Activated CD4-positive, alpha-beta T cell treated with anti-CD3 and anti-CD28 coated beads for 36 hours (primary cell): ENCODE measurements at regions of chr7 and their contacts with region 1.

Region 1: DNA sequence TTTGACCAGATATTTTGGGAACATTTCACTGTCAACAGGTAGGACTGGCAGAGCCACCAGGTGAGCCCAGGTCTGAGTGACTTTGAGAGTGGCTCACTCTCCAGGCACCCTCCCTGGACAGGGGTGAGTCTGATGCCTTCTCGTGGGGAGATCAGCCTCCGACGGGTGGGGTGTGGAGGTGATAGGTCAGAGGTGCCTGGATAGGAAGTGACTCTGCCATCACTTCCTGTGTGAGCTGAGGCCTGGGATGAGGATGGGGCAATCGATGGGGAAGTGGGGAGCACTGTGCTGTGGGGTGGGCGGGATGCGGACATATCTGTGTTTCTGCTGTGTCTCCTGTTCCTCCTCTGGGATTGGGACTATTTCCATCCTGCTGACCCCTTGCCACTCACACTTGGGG is 34.6 kb downstream of the IFT22 start:
- DNase-seq: peak; percentile 6
- ATAC-seq: no peak
- H3K4me3 Mint-ChIP-seq: no peak overlapping the region
- H3K27ac Mint-ChIP-seq: no peak overlapping the region
- H3K4me1 Mint-ChIP-seq: peaks cover 14% of the 10 kb centered on the region
- H3K27me3 Mint-ChIP-seq: peaks cover 10% of the 10 kb centered on the region

Region 2: DNA sequence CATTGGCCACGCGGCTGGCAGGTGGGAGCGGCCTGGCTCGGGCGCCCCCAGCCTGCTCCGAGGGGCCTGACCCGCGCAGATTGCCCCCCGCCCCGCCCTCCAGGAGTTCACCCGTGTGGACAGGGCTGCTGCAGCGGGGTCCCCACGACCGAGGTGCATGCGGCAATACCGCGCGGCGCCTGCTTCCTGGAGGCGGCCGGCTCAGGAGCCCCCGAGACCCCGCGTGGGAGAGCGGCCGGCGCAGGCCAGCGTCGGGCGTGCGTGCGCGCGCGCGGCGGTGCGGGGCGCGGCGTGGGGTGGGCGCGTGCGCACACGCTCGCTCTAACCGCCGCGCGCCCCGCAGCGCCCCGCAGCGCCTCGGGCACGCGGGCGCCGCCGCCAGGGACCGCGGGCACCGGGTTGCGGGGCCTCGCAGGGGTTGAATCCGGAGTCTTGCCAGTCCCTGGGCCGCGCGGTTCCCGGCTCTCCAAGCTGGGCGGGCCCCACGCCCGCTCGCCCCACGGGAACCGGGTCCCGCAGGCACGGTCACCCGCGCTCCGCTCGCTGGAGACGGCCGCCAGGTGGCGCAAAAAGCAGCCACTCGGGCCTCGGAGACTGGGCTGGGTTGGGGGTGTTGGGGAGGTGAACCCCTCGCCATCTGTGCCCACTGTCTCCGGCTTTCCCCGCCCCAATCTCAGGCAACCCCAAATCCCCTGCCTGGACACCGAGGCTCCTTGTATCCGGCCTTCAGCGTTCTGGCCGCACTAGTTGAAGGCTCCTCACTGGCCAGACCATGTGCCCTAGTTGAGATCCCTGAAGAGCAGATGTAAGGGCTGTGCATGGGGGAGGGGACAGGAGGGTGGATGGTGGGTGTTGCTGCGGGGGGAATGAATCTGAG is 390.1 kb before region 1 on chr7:
- CTCF ChIA-PET with region 1: interaction called, 3 read pairs
- POLR2A ChIA-PET with region 1: no interaction called
- intact Hi-C with region 1: loop called in 1 of 2 experiments (anchors 1 kb)
- DNase-seq: peak; percentile 74
- ATAC-seq: peak; percentile 48
- H3K4me3 Mint-ChIP-seq: no peak overlapping the region
- H3K27ac Mint-ChIP-seq: no peak overlapping the region
- H3K4me1 Mint-ChIP-seq: peaks cover 9% of the 10 kb centered on the region
- H3K27me3 Mint-ChIP-seq: peaks cover 31% of the 10 kb centered on the region

Region 3: DNA sequence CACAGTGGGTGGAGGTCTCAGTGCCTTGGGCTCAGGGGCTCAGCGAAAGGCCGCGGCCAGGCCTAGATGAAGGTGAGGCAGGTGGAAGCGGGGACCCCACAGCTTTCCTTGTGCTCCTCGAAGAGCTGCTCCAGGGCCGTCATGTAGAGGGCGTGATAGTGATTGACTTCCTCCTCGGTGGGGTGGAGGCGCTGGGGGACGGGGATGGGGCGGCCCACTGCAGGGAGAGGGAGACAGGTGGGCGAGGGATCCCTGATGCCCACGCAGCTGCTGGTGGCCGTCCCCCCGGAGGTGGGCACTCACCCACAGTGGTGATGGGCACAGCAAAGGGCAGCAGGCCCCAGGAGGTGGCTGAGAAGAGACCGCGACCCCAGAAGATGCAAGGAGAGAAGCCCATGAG is 91.1 kb before region 1 on chr7:
- CTCF ChIA-PET with region 1: interaction called, 37 read pairs
- POLR2A ChIA-PET with region 1: no interaction called
- intact Hi-C with region 1: loop called in 1 of 2 experiments (anchors 2 kb)
- DNase-seq: no peak
- ATAC-seq: no peak
- H3K4me3 Mint-ChIP-seq: no peak overlapping the region
- H3K27ac Mint-ChIP-seq: no peak overlapping the region
- H3K4me1 Mint-ChIP-seq: peaks cover under 1% of the 10 kb centered on the region
- H3K27me3 Mint-ChIP-seq: peaks cover 10% of the 10 kb centered on the region

Region 4: DNA sequence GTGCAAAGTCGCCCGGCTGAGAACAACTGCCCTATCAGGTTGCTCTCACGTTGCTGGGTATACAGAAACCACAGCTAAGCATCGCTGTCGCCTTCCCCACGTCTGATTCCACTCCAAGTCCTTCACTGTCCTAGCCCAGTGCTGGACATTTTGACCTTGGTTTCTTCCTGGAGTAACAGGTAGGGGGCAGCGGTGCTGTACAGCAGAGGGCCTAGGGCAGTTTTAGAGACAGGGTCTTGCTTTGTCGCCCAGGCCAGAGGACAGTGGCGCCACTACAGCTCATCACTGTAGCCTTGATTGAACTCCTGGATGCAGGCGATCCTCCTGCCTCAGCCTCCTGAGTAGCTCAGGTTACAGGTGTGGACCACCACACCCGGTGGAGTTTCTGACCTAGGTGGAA is 52.0 kb before region 1 on chr7:
- CTCF ChIA-PET with region 1: interaction called, 11 read pairs
- POLR2A ChIA-PET with region 1: no interaction called
- intact Hi-C with region 1: loop called in 1 of 2 experiments (anchors 1 kb)
- DNase-seq: no peak
- ATAC-seq: no peak
- H3K4me3 Mint-ChIP-seq: no peak overlapping the region
- H3K27ac Mint-ChIP-seq: no peak overlapping the region
- H3K4me1 Mint-ChIP-seq: no peaks in the 10 kb centered on the region
- H3K27me3 Mint-ChIP-seq: no peaks in the 10 kb centered on the region

Region 5: DNA sequence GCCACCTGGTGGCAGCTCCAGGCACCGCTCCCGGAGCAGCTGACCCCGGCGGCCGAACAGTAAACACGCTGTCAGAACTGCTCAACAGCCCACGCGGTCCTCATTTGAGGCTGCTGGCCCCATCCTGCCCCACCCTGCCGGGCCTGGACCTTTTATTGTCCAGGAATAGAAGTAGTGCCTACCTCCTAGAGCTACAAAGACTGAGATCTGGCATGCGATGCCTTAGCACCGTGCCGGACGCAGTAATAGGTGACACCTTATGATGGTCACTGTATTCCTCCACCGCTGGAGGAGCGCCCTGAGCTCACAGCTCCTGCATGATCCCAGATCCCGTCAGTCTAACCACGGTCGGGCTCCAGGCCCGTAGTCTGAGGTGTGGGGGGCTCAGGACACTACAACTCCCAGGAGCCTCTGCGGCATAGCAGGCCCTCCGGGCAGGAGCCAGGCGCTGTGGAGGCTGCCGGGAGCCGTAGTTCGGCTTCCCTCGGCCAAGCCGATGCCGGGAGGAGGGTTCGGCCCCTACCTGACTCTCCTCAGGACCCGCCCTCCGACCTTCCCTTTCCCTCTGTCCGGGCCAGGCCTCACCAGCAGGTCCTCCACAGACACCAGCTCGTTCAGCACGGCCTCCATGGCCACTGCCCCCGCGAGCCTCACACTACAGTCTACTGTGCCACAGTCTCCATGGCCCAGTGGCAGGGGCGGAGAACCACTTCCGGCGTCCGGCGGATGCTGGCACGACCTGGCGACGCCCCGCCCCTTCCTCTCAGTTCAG is 42.5 kb before region 1 on chr7 and contains the start of gene FIS1:
- CTCF ChIA-PET with region 1: interaction called, 16 read pairs
- POLR2A ChIA-PET with region 1: no interaction called
- intact Hi-C with region 1: loop called in 1 of 2 experiments (anchors 2 kb)
- DNase-seq: peak; percentile 97
- ATAC-seq: peak; percentile 96
- H3K4me3 Mint-ChIP-seq: peak within 1 kb of the TSS; percentile 97
- H3K27ac Mint-ChIP-seq: peak within 1 kb of the TSS; percentile 97
- H3K4me1 Mint-ChIP-seq: peaks cover 25% of the 10 kb centered on the region
- H3K27me3 Mint-ChIP-seq: no peaks in the 10 kb centered on the region
- total RNA-seq, gene FIS1: 70.5 to 92.6 TPM

Region 6: DNA sequence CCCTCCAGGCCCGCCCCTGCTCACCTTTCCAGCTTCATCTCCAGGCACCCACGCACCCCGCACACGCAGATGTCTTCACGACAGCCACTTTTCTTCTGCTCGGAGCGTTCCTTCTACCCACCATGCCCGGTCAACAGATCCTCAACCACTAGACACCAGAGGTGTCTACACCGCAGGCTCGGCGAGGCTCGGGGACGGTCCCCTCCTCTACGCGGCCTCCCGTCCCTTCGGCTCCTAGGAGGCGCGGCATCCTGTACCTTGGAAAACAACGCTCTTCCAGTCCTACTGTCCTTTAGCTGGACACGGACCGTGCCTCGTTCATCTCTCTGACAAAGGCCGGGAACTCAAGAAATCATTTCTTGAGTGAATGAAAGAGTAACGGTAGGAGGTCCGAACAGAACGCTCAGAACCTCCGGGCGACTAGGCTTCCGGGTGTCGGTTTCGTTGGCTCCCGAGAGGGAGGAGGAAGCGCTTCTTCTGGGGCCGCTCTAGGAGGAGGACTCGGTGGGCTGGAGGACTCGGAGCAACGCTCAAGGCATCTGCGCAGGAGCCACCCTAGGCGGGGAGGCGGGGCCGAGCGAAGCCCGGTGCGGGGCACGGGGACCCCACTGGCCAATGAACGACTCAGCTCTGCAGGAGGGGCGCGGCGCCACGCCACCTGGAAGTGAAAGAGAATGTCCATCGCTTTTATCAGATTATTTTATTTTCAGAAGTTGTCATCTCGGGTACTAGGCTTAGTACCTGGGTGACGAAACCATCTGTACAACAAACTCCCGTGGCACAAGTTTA is 35.0 kb before region 1 on chr7:
- CTCF ChIA-PET with region 1: interaction called, 10 read pairs
- POLR2A ChIA-PET with region 1: no interaction called
- intact Hi-C with region 1: no loop called
- DNase-seq: peak; percentile 99
- ATAC-seq: peak; percentile 100
- H3K4me3 Mint-ChIP-seq: peak overlapping the region; percentile 96
- H3K27ac Mint-ChIP-seq: peak overlapping the region; percentile 96
- H3K4me1 Mint-ChIP-seq: peaks cover 26% of the 10 kb centered on the region
- H3K27me3 Mint-ChIP-seq: peaks cover 5% of the 10 kb centered on the region